Ascending aorta (tissue), 2 donors: ENCODE measurements at regions of chr4 and their contacts with region 1.

Region 1: GRCh38 chr4:109433205-109434006 is at the start of gene SEC24B:
- DNase-seq: peak; percentile 64 to 93
- H3K4me3 ChIP-seq: peak within 1 kb of the TSS; percentile 86 to 95
- H3K27ac ChIP-seq: peak within 1 kb of the TSS; percentile 92 to 96
- H3K4me1 ChIP-seq: peaks cover 3 to 37% of the 10 kb centered on the region in 2 donors
- H3K27me3 ChIP-seq: no peaks in the 10 kb centered on the region
- CTCF ChIP-seq: peak; percentile 34 to 90 (median 58)
- total RNA-seq, gene SEC24B: 20.1 TPM

Region 2: DNA sequence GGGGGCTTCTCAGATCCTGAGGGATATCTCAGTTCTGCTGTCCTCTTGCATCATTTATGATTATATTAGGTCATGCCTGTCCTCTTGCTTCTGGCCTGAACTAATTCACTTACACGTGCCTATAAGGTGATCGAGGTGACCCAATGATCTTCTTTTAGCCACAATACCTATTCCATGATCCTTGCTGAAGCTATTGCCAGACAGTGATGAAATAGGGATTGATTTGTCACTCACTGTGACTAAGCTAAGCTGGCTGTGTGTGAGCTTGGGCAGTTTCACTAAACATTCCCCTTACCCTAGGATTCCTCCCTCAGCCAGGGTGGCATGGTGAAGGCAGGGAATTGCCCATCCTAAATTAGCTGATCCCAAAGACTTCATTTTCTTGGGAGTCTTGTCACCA is 1424.7 kb before region 1 on chr4:
- intact Hi-C with region 1: loop called (anchors 10 kb)
- DNase-seq: no peak
- H3K4me3 ChIP-seq: no peak overlapping the region
- H3K27ac ChIP-seq: peak overlapping the region in 1 of 2 donors; percentile 39
- H3K4me1 ChIP-seq: peaks cover 0 to 29% of the 10 kb centered on the region in 2 donors
- H3K27me3 ChIP-seq: no peaks in the 10 kb centered on the region
- CTCF ChIP-seq: no peak

Region 3: GRCh38 chr4:108620101-108620932 is 813.1 kb before region 1 on chr4 and contains the start of gene RPL34:
- intact Hi-C with region 1: loop called (anchors 5 kb)
- DNase-seq: peak; percentile 89 to 99
- H3K4me3 ChIP-seq: peak within 1 kb of the TSS; percentile 66 to 83
- H3K27ac ChIP-seq: peak within 1 kb of the TSS; percentile 82 to 85
- H3K4me1 ChIP-seq: peaks cover 3 to 11% of the 10 kb centered on the region in 2 donors
- H3K27me3 ChIP-seq: no peaks in the 10 kb centered on the region
- CTCF ChIP-seq: no peak
- total RNA-seq, gene RPL34: 571 TPM

Region 4: GRCh38 chr4:109465069-109465468 is 31.7 kb after region 1 on chr4:
- intact Hi-C with region 1: loop called (anchors 5 kb)
- DNase-seq: no peak
- H3K4me3 ChIP-seq: no peak overlapping the region
- H3K27ac ChIP-seq: no peak overlapping the region
- H3K4me1 ChIP-seq: peaks cover 3 to 7% of the 10 kb centered on the region in 2 donors
- H3K27me3 ChIP-seq: no peaks in the 10 kb centered on the region
- CTCF ChIP-seq: no peak

Region 5: GRCh38 chr4:109559983-109560686 is 126.7 kb after region 1 on chr4 and contains the start of gene MCUB:
- intact Hi-C with region 1: loop called (anchors 5 kb)
- DNase-seq: peak; percentile 52 to 91
- H3K4me3 ChIP-seq: peak within 1 kb of the TSS; percentile 66 to 93
- H3K27ac ChIP-seq: peak within 1 kb of the TSS; percentile 76 to 79
- H3K4me1 ChIP-seq: peaks cover 0 to 3% of the 10 kb centered on the region in 2 donors
- H3K27me3 ChIP-seq: no peaks in the 10 kb centered on the region
- CTCF ChIP-seq: no peak
- total RNA-seq, gene MCUB: 430 TPM

Region 6: DNA sequence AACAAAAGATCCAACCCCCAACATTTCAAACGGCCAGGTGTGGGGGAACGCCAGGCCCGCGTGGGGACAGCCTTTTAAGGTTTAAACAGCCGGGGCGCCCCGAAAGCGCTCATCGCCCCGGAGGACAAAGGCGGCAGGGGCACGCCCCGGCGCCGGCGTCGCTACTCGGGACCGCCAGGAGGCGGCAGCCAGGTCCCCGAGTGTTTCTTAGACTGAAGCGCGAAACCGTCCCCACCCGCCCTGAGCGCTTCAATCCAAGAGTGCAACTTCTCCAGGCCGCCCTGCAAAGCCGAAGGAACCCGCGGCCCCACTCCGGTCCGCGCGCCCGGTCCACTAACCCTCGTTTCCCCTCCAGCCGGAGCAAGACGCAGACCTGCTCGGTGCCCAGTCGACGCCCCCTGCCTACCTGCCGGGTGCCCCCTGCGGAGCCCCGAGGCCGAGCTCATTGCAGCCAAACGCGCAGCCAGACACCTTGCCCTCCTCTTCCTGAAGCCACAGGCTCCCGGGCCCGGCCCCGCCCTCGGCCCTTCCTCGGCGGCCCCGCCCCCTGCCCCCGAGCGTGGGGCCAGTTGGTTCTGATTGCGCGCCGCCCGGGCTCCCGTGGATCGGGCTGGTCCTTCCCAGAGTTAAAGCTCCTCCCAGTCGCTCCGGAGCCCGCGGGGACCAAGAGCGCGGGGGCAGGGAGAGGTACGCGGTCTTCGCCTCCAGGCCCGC is 269.7 kb after region 1 on chr4 and contains the start of gene CASP6:
- intact Hi-C with region 1: loop called (anchors 5 kb)
- DNase-seq: peak; percentile 52 to 92
- H3K4me3 ChIP-seq: peak within 1 kb of the TSS; percentile 58 to 77
- H3K27ac ChIP-seq: peak within 1 kb of the TSS; percentile 73 to 82
- H3K4me1 ChIP-seq: peaks cover 6 to 15% of the 10 kb centered on the region in 2 donors
- H3K27me3 ChIP-seq: no peaks in the 10 kb centered on the region
- CTCF ChIP-seq: peak; percentile 65 to 74 (median 69)
- total RNA-seq, gene CASP6: not detected

Region 7: DNA sequence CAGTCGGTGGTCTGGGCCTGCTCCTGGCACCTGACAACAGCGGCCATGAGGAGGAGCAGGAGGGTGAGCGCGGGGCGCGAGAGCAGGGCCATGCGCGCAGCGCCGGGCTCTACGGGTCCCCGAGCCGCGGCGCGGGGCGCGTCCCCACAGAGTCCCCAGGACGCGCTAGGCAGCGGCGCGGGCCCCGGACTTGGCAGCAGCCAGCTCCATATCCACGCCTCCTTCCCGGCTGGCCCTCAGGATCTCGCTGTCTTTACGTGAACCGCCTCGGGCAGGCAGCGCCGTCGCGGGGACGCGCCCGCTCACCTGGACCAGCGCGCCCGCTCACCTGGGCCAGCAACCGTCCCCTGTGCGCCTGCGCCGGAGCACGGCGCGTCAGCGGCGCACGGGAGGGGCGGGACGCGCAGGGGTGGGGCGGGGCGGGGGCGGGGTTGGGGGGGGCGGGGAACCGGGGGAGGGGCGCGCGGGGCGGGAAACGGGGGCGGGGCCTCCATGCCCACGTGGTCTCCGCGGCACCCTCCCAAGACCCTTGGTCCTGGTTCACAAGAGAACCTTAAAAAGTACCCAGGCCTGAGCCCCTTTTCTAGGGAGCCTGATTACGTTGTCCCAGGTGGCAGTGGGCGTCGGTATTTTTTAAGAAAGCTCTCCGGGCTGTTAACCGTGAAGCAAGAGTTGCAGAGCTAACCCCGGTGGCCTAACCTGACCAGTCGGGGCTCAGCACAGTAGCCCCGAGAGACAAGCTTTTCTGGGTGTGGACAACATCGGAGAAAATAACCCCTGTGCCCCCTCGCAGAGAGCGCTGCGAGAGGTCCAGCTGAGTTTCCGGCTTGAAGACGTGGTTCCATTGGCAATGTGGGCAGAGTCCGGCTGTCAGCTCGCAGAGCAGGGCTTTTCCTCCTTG is 296.6 kb after region 1 on chr4 and contains the start of gene PLA2G12A:
- intact Hi-C with region 1: loop called (anchors 1 kb)
- DNase-seq: peak; percentile 9 to 79
- H3K4me3 ChIP-seq: peak within 1 kb of the TSS; percentile 86 to 88
- H3K27ac ChIP-seq: peak within 1 kb of the TSS; percentile 70 to 71
- H3K4me1 ChIP-seq: peaks cover 0 to 6% of the 10 kb centered on the region in 2 donors
- H3K27me3 ChIP-seq: no peaks in the 10 kb centered on the region
- CTCF ChIP-seq: no peak
- total RNA-seq, gene PLA2G12A: 8.9 TPM